ENCODE measurements at regions of chr5 and their contacts with region 1.

Region 1: GRCh38 chr5:177006265-177006972 is at the start of gene UIMC1:
- DNase-seq: peak; percentile 96
- H3K4me3 ChIP-seq: peak within 1 kb of the TSS; percentile 77 to 99 (median 82)
- H3K27ac ChIP-seq: peak within 1 kb of the TSS; percentile 73
- H3K4me1 ChIP-seq: peaks cover 16% of the 10 kb centered on the region
- H3K27me3 ChIP-seq: no peaks in the 10 kb centered on the region
- CTCF ChIP-seq: no peak
- POLR2A ChIP-seq: peak; percentile 56
- total RNA-seq, gene UIMC1: 56.5 and 60.1 TPM in 2 replicates

Region 2: GRCh38 chr5:176979669-176980068 is 26.8 kb before region 1 on chr5:
- CTCF ChIA-PET with region 1: no interaction called
- POLR2A ChIA-PET with region 1: no interaction called
- dilution Hi-C with region 1: no loop called
- intact Hi-C with region 1: no loop called
- DNase-seq: no peak
- H3K4me3 ChIP-seq: no peak overlapping the region
- H3K27ac ChIP-seq: no peak overlapping the region
- H3K4me1 ChIP-seq: no peaks in the 10 kb centered on the region
- H3K27me3 ChIP-seq: no peaks in the 10 kb centered on the region
- CTCF ChIP-seq: no peak
- POLR2A ChIP-seq: no peak

Region 3: GRCh38 chr5:176994460-176995121 is 11.8 kb before region 1 on chr5:
- CTCF ChIA-PET with region 1: interaction called, 4 read pairs
- POLR2A ChIA-PET with region 1: interaction called, 7 read pairs
- dilution Hi-C with region 1: no loop called
- intact Hi-C with region 1: loop called (anchors 1 kb)
- DNase-seq: peak; percentile 98
- H3K4me3 ChIP-seq: no peak overlapping the region
- H3K27ac ChIP-seq: peak overlapping the region; percentile 92
- H3K4me1 ChIP-seq: peaks cover 37% of the 10 kb centered on the region
- H3K27me3 ChIP-seq: no peaks in the 10 kb centered on the region
- CTCF ChIP-seq: no peak
- POLR2A ChIP-seq: peak; percentile 69

Region 4: GRCh38 chr5:177022384-177023308 is 16.2 kb after region 1 on chr5 and contains the start of gene ZNF346:
- CTCF ChIA-PET with region 1: interaction called, 16 read pairs
- POLR2A ChIA-PET with region 1: interaction called, 4 read pairs
- dilution Hi-C with region 1: no loop called
- intact Hi-C with region 1: loop called (anchors 1 kb)
- DNase-seq: peak; percentile 88
- H3K4me3 ChIP-seq: peak within 1 kb of the TSS; percentile 57 to 94 (median 87)
- H3K27ac ChIP-seq: peak within 1 kb of the TSS; percentile 51
- H3K4me1 ChIP-seq: peaks cover 9% of the 10 kb centered on the region
- H3K27me3 ChIP-seq: no peaks in the 10 kb centered on the region
- CTCF ChIP-seq: peak; percentile 23 to 58
- POLR2A ChIP-seq: peak; percentile 92
- total RNA-seq, gene ZNF346: 28.6 and 35.2 TPM in 2 replicates

Region 5: GRCh38 chr5:177133091-177133852 is 126.9 kb after region 1 on chr5 and contains the start of gene NSD1:
- CTCF ChIA-PET with region 1: no interaction called
- POLR2A ChIA-PET with region 1: no interaction called
- dilution Hi-C with region 1: no loop called
- intact Hi-C with region 1: no loop called
- DNase-seq: peak; percentile 75
- H3K4me3 ChIP-seq: peak within 1 kb of the TSS; percentile 25 to 81 (median 66)
- H3K27ac ChIP-seq: peak within 1 kb of the TSS; percentile 30
- H3K4me1 ChIP-seq: peaks cover 43% of the 10 kb centered on the region
- H3K27me3 ChIP-seq: no peaks in the 10 kb centered on the region
- CTCF ChIP-seq: no peak
- POLR2A ChIP-seq: peak; percentile 78
- total RNA-seq, gene NSD1: 76.1 and 90.4 TPM in 2 replicates